ENCODE measurements at regions of chr2 and their contacts with region 1.

Region 1: GRCh38 chr2:156553714-156554442 is 117.7 kb downstream of the GPD2 start:
- DNase-seq: no peak
- ATAC-seq: no peak
- H3K4me3 ChIP-seq: no peak overlapping the region
- H3K27ac ChIP-seq: no peak overlapping the region
- H3K4me1 ChIP-seq: no peaks in the 10 kb centered on the region
- H3K27me3 ChIP-seq: no peaks in the 10 kb centered on the region
- CTCF ChIP-seq: no peak

Region 2: DNA sequence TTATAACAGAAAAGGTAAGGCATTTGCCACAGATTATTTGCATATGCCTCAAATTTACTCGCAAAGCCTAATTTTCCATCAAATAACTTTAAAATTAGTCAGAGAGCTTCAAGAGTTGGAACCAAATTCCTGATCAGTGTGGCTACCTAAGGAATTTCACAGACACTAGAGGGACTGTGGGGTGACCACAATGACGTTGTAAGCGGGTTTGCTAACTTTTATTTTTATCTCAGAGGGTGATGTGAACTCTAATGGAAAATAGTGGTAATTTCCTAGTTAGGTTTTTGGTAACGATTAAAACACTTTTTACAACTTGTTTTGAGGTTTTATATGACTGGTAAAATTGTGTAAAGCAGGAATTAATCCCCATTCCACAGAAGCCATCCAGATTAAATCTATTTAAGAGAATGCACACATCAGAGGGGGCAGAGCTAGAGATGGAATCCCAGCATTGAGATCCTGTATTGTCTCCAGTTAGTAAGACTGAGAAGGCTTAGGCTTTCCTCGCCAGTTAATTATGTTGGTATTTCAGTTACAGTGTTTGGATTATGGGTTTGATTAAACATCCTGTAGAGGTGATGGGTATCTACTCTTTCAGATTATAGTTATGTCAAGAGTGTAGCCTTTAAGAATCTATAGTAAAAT is 11.3 kb after region 1 on chr2:
- CTCF ChIA-PET with region 1: no interaction called
- POLR2A ChIA-PET with region 1: interaction called, 10 read pairs
- intact Hi-C with region 1: no loop called
- DNase-seq: peak; percentile 12
- ATAC-seq: no peak
- H3K4me3 ChIP-seq: no peak overlapping the region
- H3K27ac ChIP-seq: no peak overlapping the region
- H3K4me1 ChIP-seq: no peaks in the 10 kb centered on the region
- H3K27me3 ChIP-seq: no peaks in the 10 kb centered on the region
- CTCF ChIP-seq: no peak

Region 3: GRCh38 chr2:156649596-156649995 is 95.7 kb after region 1 on chr2:
- CTCF ChIA-PET with region 1: no interaction called
- POLR2A ChIA-PET with region 1: no interaction called
- intact Hi-C with region 1: no loop called
- DNase-seq: no peak
- ATAC-seq: no peak
- H3K4me3 ChIP-seq: no peak overlapping the region
- H3K27ac ChIP-seq: no peak overlapping the region
- H3K4me1 ChIP-seq: peaks cover 17% of the 10 kb centered on the region; the same call in 1 of the 2 replicates
- H3K27me3 ChIP-seq: no peaks in the 10 kb centered on the region
- CTCF ChIP-seq: no peak

Region 4: GRCh38 chr2:157172239-157172638 is 618.4 kb after region 1 on chr2:
- CTCF ChIA-PET with region 1: no interaction called
- POLR2A ChIA-PET with region 1: no interaction called
- intact Hi-C with region 1: no loop called
- DNase-seq: peak; percentile 43
- ATAC-seq: no peak
- H3K4me3 ChIP-seq: no peak overlapping the region
- H3K27ac ChIP-seq: no peak overlapping the region; the same call in 1 of the 2 replicates
- H3K4me1 ChIP-seq: peaks cover 23% of the 10 kb centered on the region
- H3K27me3 ChIP-seq: no peaks in the 10 kb centered on the region
- CTCF ChIP-seq: no peak

Measured in PC-3 (cell line).